ENCODE measurements at regions of chr5 and their contacts with region 1.

Region 1: DNA sequence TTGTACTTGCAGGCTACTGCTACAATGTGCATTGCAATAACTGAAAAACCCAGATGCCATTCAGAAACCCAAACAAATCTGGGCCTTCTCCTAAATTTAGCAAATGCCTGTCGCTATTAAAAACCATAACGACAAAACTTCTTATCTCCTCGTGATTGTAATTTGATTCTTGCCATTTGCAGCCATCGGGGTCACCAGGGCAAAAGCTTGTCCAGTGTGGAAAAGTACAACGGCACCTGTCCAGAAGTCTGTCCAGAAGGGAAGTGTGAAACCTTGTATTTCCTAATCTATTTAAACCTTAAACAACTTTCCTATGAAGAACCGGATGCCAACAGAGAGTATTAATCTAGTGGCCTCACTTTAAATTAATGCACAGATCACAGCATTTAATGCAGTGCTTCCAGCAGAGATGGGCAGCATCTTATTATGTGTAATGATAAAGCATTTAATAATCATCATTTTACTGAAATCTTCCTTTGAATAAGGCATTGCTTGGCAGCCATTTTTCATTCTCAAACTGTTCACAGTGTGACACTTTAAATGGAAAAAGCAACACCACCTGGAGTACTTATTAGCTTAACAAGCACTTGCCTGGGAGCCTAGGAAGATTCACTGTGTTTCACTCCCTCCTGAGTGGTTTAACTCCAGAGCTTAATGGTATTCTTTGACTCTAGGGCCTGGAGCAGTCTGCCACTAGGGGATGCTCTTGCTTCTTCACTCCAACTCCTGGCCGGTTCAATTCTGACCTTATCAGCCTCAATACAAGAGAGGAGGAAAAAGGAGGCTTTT is 4.9 kb upstream of the C7 start:
- DNase-seq: peak; percentile 90
- ATAC-seq: peak; percentile 96
- H3K4me3 ChIP-seq: no peak overlapping the region
- H3K27ac ChIP-seq: no peak overlapping the region
- H3K4me1 ChIP-seq: peaks cover 20% of the 10 kb centered on the region
- H3K27me3 ChIP-seq: no peaks in the 10 kb centered on the region
- CTCF ChIP-seq: peak; percentile 99

Region 2: GRCh38 chr5:40798012-40798855 is 106.2 kb before region 1 on chr5 and contains the start of gene PRKAA1:
- CTCF ChIA-PET with region 1: interaction called, 11 read pairs
- POLR2A ChIA-PET with region 1: no interaction called
- intact Hi-C with region 1: no loop called
- DNase-seq: peak; percentile 91
- ATAC-seq: peak; percentile 81
- H3K4me3 ChIP-seq: peak within 1 kb of the TSS; percentile 83
- H3K27ac ChIP-seq: peak within 1 kb of the TSS; percentile 87
- H3K4me1 ChIP-seq: peaks cover 26% of the 10 kb centered on the region
- H3K27me3 ChIP-seq: no peaks in the 10 kb centered on the region
- CTCF ChIP-seq: peak; percentile 47
- total RNA-seq, gene PRKAA1: 84.5 and 86.0 TPM in 2 replicates

Region 3: GRCh38 chr5:41009232-41009631 is 104.8 kb after region 1 on chr5:
- CTCF ChIA-PET with region 1: no interaction called
- POLR2A ChIA-PET with region 1: no interaction called
- intact Hi-C with region 1: loop called (anchors 1 kb)
- DNase-seq: peak; percentile 99
- ATAC-seq: peak; percentile 96
- H3K4me3 ChIP-seq: no peak overlapping the region
- H3K27ac ChIP-seq: peak overlapping the region; percentile 56
- H3K4me1 ChIP-seq: peaks cover 21% of the 10 kb centered on the region
- H3K27me3 ChIP-seq: no peaks in the 10 kb centered on the region
- CTCF ChIP-seq: no peak

Region 4: DNA sequence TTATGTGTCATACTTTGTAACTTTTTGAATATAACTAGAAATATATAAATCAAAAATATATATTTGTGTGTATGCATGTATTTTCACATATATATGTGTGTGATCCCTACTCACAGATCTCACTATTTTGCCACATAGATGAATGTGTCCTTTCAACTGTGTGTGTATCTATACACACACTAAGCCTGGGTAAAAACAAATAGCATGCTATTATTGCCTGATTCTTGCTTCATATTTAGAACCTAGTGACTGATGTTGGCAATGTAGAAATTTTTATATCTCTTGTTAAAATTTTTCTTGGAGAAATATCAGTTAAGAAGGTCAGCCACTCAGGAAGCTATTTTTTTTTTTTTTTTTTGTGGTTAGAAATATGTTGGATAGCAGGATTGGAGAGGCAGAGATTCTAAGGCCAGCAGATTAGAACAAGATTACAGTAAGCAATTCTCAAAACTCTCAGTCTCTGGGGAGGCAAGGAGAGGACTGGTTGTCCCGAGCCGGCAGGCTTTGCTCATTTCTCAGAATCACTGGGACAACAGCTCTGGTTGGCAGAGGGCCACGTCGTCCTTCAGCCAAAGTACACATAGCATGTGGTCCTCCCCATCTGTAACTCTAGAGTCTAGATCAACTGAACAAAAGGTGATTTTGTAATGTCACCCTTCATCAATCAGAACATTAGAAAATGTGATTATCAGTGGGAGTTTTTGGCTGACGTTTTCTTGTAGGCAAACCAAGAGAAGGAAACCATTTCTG is 289.2 kb after region 1 on chr5:
- CTCF ChIA-PET with region 1: interaction called, 3 read pairs
- POLR2A ChIA-PET with region 1: no interaction called
- intact Hi-C with region 1: loop called (anchors 5 kb)
- DNase-seq: peak; percentile 87
- ATAC-seq: peak; percentile 25; the same call in 1 of the 2 replicates
- H3K4me3 ChIP-seq: no peak overlapping the region
- H3K27ac ChIP-seq: no peak overlapping the region
- H3K4me1 ChIP-seq: peaks cover 24% of the 10 kb centered on the region
- H3K27me3 ChIP-seq: no peaks in the 10 kb centered on the region
- CTCF ChIP-seq: no peak

Region 5: GRCh38 chr5:41346609-41347008 is 442.2 kb after region 1 on chr5:
- CTCF ChIA-PET with region 1: interaction called, 4 read pairs
- POLR2A ChIA-PET with region 1: no interaction called
- intact Hi-C with region 1: loop called (anchors 2 kb)
- DNase-seq: peak; percentile 66
- ATAC-seq: no peak; the same call in 1 of the 2 replicates
- H3K4me3 ChIP-seq: no peak overlapping the region
- H3K27ac ChIP-seq: no peak overlapping the region
- H3K4me1 ChIP-seq: peaks cover 6% of the 10 kb centered on the region; the same call in 1 of the 2 replicates
- H3K27me3 ChIP-seq: no peaks in the 10 kb centered on the region
- CTCF ChIP-seq: peak; percentile 67

Region 6: DNA sequence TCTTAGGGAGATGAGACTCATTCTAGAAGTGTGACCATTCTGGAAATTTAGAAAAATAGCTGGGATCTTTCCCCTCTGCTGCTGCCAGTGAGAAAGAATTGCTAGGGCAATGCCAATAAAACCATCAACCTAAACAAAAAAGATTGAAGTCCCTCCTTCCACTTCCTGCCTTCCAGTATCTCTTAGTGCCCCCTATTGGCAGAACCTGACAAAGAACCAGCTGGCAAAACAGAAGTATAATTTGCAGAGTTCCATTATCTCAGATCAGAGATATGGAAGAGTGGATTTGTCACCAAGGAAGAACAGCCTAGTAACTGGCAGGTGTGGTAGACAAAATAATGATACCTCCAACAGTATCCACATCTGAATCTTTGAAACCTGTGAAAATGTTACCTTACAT is 619.8 kb after region 1 on chr5:
- CTCF ChIA-PET with region 1: no interaction called
- POLR2A ChIA-PET with region 1: no interaction called
- intact Hi-C with region 1: loop called (anchors 1 kb)
- DNase-seq: peak; percentile 43
- ATAC-seq: no peak
- H3K4me3 ChIP-seq: no peak overlapping the region
- H3K27ac ChIP-seq: no peak overlapping the region
- H3K4me1 ChIP-seq: peaks cover 21% of the 10 kb centered on the region
- H3K27me3 ChIP-seq: no peaks in the 10 kb centered on the region
- CTCF ChIP-seq: peak; percentile 58